ENCODE measurements at regions of chr10 and their contacts with region 1.

Region 1: DNA sequence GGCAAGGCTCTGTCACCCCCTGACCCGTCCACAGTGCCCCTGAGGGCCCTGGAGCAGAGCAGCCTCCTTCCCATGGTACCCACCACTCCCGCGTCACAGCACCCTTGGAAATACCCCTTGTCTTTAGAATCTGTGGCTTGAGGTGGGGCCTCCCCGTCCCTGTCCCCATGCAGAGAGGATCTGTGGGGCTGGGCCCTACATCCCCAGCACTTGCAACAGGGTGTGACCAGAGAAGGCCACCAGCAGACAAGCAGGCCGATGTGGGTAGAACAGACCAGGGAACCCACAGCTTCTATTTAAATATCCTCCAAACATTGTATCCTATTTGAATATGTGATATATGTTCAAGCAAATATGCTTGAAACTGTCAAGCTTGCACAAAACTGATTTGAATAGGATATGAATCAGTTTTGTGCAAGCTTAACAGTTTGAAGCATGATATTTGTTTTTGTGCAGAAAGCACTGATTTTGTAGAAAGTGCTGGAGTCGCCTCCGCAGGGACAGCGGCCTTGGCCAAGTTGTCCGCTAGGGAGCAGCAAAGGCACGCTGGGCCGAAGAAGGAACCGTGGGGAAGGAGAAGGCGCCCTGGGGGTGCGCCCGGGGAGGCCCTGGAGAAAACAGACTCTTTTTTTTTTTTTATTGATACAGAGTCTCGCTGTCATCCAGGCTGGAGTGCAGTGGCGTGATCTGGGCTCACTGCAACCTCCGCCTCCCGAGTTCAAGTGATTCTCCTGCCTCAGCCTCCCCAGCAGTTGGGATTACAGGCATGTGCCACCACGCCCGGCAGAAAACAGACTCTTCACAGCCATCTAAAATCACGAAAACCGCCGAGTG is 2.2 kb downstream of the CFAP46 start:
- DNase-seq: no peak
- ATAC-seq: peak; percentile 30; the same call in 2 of the 3 replicates
- H3K4me3 ChIP-seq: no peak overlapping the region
- H3K27ac ChIP-seq: no peak overlapping the region
- H3K4me1 ChIP-seq: 0 out of 2 replicates have a peak, but pooled peaks cover 9% of the 10 kb centered on the region
- H3K27me3 ChIP-seq: peaks cover 6 to 37% of the 10 kb centered on the region in 2 experiments; a peak in 3 of 5 replicates
- CTCF ChIP-seq: peak; percentile 81
- EP300 ChIP-seq: no peak
- POLR2A ChIP-seq: no peak
- RAD21 ChIP-seq: peak; percentile 55; the same call in 1 of the 2 replicates

Region 2: DNA sequence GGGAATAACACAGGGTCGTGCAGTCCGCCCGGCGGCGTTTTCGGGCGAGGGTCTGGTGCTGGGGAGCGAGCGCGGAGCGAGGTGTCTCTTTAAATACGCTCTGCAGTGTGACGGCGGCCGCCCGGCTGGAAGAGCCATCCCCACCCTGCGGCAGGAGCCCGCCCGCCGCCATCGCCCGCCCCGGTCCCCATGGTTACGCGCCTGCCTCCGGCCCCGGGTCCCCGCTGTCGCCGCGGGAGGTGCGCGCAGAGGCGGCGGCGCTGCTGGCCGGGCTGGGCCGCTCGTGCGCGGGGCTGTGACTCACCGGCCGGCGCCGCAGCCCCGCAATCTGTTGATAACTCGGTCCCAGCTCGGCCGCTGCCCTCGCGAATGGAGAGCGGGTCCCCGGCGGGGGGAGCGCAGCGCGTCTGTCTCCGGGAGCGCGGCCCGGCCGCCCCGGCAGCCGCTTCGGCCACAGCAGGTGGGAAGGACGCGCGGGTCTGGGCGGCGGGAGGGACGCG is 147.6 kb after region 1 on chr10 and contains the start of gene ADGRA1:
- CTCF ChIA-PET with region 1: no interaction called
- POLR2A ChIA-PET with region 1: no interaction called
- in situ Hi-C with region 1: no loop called
- intact Hi-C with region 1: no loop called
- DNase-seq: no peak
- ATAC-seq: peak; percentile 29
- H3K4me3 ChIP-seq: peak within 1 kb of the TSS in 2 of 3 experiments; percentile 37 to 46; a peak in 2 of 6 replicates
- H3K27ac ChIP-seq: no peak within 1 kb of the TSS
- H3K4me1 ChIP-seq: peaks cover 8% of the 10 kb centered on the region; the same call in 1 of the 2 replicates
- H3K27me3 ChIP-seq: peaks cover 24 to 87% of the 10 kb centered on the region in 2 experiments
- CTCF ChIP-seq: no peak
- EP300 ChIP-seq: no peak
- POLR2A ChIP-seq: no peak
- RAD21 ChIP-seq: no peak
- total RNA-seq, gene ADGRA1: not detected in 2 replicates

Region 3: DNA sequence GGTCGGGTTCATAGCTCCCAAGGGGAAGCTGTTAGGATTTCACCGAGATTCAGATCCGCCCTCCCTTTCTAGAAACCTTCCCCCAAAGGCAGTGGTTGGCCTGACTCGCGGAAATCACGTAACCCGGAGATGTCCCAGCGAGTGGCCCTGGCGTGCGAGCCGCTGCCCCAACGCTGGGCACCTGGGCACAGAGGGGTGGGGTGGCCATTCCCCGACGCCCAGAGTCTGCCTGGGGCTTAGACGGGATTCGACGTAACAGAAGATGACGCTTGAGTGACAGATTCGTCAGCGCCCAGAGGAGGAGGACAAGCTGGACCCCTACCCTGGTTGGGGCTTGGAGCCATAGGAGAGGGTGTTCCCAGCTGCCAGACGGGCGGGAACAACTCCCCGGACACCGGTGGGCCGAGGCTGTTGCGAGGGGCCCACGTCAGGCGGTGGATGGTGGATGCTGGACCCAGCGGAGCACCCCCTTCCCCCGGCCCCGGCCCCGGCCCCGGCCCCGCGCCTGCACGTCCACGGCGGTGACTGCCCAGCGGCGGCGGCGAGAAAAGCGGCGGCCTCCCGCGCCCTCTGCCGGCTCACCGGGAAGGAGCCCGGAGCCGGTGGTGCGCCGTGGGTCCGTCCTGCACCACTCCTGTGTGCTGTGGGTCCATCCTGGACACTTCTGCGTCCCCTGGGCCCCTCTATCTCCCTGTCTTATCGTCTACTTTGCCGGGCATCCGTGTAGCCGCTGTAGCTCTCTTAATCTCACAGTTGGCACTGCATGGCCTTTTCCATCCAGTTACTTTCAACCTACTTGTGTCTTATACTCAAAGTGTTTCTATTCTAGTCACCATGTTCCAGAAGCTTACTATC is 184.4 kb after region 1 on chr10:
- CTCF ChIA-PET with region 1: interaction called, 24 read pairs
- POLR2A ChIA-PET with region 1: no interaction called
- in situ Hi-C with region 1: loop called (anchors 10 kb)
- intact Hi-C with region 1: loop called (anchors 5 kb)
- DNase-seq: no peak
- ATAC-seq: peak; percentile 68
- H3K4me3 ChIP-seq: no peak overlapping the region
- H3K27ac ChIP-seq: no peak overlapping the region
- H3K4me1 ChIP-seq: no peaks in the 10 kb centered on the region
- H3K27me3 ChIP-seq: peaks cover 8 to 26% of the 10 kb centered on the region in 2 experiments; a peak in 4 of 5 replicates
- CTCF ChIP-seq: peak; percentile 72
- EP300 ChIP-seq: no peak
- POLR2A ChIP-seq: no peak
- RAD21 ChIP-seq: no peak; the same call in 1 of the 2 replicates